Calu3 (cell line): ENCODE measurements at regions of chr6 and their contacts with region 1.

Region 1: DNA sequence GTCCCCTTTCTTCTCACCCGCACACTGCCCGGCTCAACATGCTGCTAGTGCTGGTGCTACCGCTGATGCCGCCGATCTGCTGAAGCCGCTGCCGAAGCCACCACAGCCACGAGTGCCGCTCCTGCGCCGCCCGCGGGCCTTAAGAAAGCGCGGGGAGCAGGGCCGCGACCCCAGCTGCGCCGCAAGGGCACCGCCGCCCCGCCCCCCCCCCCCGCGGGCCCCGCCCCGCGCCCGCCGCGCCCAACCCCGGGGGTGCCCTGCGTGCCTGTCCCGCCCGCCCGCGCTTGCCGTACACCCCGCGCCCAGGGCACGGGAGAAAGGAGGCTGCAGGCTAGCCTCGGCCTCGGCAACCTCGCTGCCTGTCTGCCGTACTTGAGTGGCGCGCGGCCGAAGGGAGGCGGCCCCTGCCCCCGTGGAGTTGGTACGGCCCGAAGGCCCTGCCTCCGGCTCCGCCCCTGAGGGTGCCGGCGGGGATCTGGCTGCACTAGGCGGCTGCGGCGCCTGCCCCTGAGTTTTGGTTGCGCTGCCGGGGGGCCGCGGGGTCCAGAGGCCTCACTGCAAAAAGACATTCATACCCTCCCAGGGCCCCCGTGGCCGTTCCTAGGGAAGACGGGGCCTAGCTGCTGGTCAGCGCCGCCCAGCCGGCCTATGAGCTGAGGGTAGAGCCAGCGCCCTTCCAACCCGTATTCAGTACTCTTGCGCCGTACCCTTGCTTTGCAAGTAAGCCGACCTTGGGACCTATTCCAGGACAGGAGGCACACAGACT is at the start of gene SOD2:
- DNase-seq: peak; percentile 86
- H3K4me3 Mint-ChIP-seq: peak within 1 kb of the TSS; percentile 67
- H3K27ac Mint-ChIP-seq: peak within 1 kb of the TSS; percentile 80
- H3K4me1 Mint-ChIP-seq: peaks cover 29% of the 10 kb centered on the region
- H3K27me3 Mint-ChIP-seq: no peaks in the 10 kb centered on the region
- CTCF ChIP-seq: no peak
- total RNA-seq, gene SOD2: 143 and 202 TPM in 2 replicates

Region 2: DNA sequence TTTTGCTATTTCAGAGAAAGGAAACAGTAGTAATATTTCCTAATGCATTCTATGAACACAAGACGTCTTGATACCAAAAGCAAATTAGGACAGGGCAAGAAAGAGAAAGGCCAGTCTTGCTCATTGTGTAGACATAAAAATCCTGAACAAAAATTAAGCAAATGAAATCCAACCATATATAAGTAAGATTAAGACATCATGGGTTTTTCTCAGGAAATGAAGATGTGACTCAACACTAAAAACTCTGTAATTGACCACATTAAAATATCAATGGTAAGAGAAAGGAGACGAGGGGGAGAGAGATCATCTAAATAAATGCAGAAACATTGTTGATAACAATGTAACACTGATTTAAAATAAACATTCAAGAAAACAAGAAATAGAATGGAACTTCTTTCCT is 205.7 kb before region 1 on chr6:
- CTCF ChIA-PET with region 1: no interaction called
- intact Hi-C with region 1: no loop called
- DNase-seq: no peak
- H3K4me3 Mint-ChIP-seq: no peak overlapping the region
- H3K27ac Mint-ChIP-seq: no peak overlapping the region
- H3K4me1 Mint-ChIP-seq: peaks cover 8% of the 10 kb centered on the region
- H3K27me3 Mint-ChIP-seq: peaks cover 28% of the 10 kb centered on the region
- CTCF ChIP-seq: no peak

Region 3: GRCh38 chr6:159726918-159727716 is 33.8 kb after region 1 on chr6 and contains the start of gene WTAP:
- CTCF ChIA-PET with region 1: interaction called, 5 read pairs
- intact Hi-C with region 1: loop called (anchors 2 kb)
- DNase-seq: peak; percentile 98
- H3K4me3 Mint-ChIP-seq: peak within 1 kb of the TSS; percentile 91
- H3K27ac Mint-ChIP-seq: peak within 1 kb of the TSS; percentile 88
- H3K4me1 Mint-ChIP-seq: no peaks in the 10 kb centered on the region
- H3K27me3 Mint-ChIP-seq: no peaks in the 10 kb centered on the region
- CTCF ChIP-seq: no peak
- total RNA-seq, gene WTAP: 91.8 and 103 TPM in 2 replicates

Region 4: GRCh38 chr6:159761873-159762680 is 68.8 kb after region 1 on chr6 and contains the start of gene ACAT2:
- CTCF ChIA-PET with region 1: interaction called, 4 read pairs
- intact Hi-C with region 1: loop called (anchors 1 kb)
- DNase-seq: peak; percentile 96
- H3K4me3 Mint-ChIP-seq: peak within 1 kb of the TSS; percentile 99
- H3K27ac Mint-ChIP-seq: peak within 1 kb of the TSS; percentile 88
- H3K4me1 Mint-ChIP-seq: peaks cover 36% of the 10 kb centered on the region
- H3K27me3 Mint-ChIP-seq: no peaks in the 10 kb centered on the region
- CTCF ChIP-seq: no peak
- total RNA-seq, gene ACAT2: 92.3 and 108 TPM in 2 replicates

Region 5: GRCh38 chr6:159852877-159853276 is 159.6 kb after region 1 on chr6:
- CTCF ChIA-PET with region 1: no interaction called
- intact Hi-C with region 1: loop called (anchors 2 kb)
- DNase-seq: peak; percentile 37
- H3K4me3 Mint-ChIP-seq: no peak overlapping the region
- H3K27ac Mint-ChIP-seq: no peak overlapping the region
- H3K4me1 Mint-ChIP-seq: no peaks in the 10 kb centered on the region
- H3K27me3 Mint-ChIP-seq: peaks cover 20% of the 10 kb centered on the region
- CTCF ChIP-seq: no peak

Region 6: DNA sequence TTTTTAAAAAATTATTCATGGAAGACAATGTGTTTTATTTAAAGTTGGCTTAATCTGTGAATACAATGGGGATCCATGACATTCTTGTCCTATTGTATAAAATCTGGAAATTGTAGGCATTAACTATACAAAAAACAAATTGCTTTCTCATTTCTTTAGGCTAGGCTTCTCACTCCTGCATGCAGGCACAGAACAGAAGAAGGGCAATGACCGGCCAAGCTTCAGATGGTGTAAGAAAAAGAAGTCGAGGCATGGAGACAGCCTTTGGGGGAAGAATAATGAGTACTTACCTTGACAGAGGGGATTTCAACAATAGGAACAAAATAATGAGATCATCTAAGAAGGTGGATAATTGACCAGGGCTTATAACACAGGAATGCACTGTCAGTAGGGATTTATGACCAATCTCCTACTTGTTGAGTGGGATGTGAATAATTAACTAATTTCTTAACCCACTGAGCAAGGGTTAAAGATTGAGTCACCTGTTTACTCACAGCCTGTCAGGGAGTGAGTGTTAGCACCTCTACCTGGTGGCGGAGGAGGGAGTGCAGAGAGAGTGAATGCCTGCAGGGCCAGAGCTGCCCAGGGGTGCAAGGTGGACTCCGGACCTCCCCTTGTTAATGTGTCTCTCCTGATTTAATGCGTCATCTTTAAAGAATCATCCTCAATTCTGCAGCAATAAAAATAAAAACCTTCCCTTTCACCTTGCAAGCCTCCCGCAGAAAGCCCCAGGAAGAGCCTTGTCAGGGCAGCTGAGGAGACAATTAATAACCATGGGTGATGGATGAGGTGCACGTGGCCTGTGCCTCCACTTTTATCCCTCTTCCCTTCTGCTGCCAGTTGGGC is 561.4 kb after region 1 on chr6:
- CTCF ChIA-PET with region 1: no interaction called
- intact Hi-C with region 1: loop called (anchors 10 kb)
- DNase-seq: peak; percentile 86
- H3K4me3 Mint-ChIP-seq: peak overlapping the region; percentile 34
- H3K27ac Mint-ChIP-seq: peak overlapping the region; percentile 87
- H3K4me1 Mint-ChIP-seq: peaks cover 34% of the 10 kb centered on the region
- H3K27me3 Mint-ChIP-seq: no peaks in the 10 kb centered on the region
- CTCF ChIP-seq: no peak